Heart left ventricle (tissue), 16 donors: ENCODE measurements at regions of chrX and their contacts with region 1.

Region 1: DNA sequence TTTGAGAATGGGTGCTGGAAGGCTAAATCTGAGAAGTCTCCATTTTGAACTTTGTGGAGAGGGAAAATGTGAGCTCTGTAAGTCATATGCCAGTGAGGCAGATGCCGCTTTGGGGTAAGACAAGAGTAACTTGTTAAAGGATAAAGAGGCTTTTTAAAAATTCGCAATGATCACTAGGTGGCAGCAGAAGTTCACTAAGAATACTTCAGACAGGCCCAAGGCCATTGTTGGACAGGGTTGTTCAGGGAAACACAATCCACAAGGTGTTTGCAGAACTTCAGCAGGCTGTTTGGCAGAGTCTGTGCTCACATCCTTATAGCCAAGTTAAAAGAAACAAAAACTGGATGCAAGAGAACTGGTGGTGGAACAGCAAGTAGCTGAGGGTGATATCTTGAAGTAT is 13.7 kb upstream of the PIGA start:
- DNase-seq: peak in 4 of 5 donors; percentile 18 to 34 (median 27)
- ATAC-seq: peak; percentile 76 to 88 (median 82)
- H3K4me3 ChIP-seq: no peak overlapping the region
- H3K27ac ChIP-seq: no peak overlapping the region
- H3K4me1 ChIP-seq: no peaks in the 10 kb centered on the region
- H3K27me3 ChIP-seq: peaks cover 0 to 10% (median 0%) of the 10 kb centered on the region in 9 donors
- CTCF ChIP-seq: peak; percentile 33 to 61 (median 49)
- POLR2A ChIP-seq: no peak

Region 2: DNA sequence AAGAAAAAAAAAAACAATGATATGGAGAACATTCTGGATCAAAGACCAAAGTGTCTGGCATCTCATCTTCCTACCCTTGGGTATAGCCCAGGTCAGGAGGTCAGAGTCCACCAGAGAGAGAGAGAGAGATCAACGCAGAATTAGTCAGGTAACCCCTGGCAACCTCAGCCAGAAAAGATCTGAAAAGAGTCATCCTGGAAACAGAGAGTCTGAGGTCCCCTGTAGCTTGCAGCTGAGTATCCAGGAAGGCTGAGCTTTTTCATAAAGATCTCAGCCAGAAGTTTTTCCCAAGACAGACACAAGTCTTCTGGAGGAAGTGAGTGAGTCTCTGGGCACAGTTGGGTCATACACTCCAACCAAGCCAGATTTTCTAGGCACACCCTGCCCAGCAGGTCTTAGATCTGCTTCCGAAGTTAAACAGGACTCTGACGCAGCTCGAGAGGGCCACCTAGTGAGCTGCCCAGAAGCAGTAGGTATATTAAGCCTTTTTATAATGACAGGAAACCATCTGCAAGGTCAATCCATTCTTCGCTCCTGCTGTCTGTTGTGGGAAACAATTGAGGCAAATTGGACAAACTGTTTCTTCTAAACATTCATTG is 216.0 kb after region 1 on chrX:
- intact Hi-C with region 1: loop called in 6 of 10 experiments (anchors 5 to 10 kb)
- DNase-seq: peak; percentile 33 to 54 (median 52)
- ATAC-seq: peak; percentile 58 to 95 (median 92)
- H3K4me3 ChIP-seq: no peak overlapping the region
- H3K27ac ChIP-seq: no peak overlapping the region
- H3K4me1 ChIP-seq: peaks cover 0 to 10% (median 0%) of the 10 kb centered on the region in 12 donors
- H3K27me3 ChIP-seq: peaks cover 0 to 64% (median 0%) of the 10 kb centered on the region in 9 donors
- CTCF ChIP-seq: peak; percentile 29 to 67 (median 57)
- POLR2A ChIP-seq: no peak

Region 3: DNA sequence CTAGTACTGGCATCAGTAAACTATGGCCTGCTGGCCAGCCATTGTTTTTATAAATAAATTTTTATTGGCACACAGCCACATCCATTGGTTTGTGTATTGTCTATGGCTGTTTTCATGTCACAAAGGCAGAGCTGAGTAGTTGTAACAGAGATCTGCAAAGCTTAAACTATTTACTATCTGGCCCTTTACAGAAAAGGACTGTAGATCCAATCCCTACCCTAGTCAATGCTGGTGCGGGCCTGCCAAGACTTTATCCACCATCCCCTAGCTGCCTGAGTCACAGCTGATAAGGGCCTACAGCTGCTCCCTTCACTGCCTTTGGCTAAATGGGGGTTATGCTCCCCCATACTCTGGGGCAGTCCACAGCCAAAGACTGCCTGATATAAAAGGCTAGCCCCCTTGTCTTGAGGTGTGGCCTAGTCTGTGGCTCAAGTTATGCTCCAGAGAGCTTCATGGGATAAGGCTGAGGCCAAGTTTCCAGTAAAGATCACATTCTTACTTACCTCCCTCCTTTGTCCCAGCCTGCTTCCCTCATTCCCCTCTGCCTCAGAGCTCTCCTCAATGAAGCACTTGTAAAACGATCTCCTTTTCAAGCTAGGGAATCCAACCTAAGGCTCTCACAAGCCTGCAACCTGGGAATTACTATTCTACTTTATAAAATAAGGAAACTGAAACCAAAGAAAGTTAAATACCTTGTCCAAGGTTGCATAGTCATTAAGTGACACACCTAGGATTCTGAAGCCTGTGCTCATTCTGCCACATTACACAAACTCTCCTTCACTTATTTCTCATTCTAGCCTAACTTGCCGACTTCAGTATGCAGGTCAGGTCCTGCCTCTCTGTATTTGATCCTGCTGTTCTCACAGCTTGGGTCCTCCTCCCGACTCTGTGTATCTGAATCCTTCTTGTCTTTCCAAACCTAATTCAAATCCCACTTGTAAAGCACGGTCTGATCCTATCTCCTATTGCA is 231.0 kb after region 1 on chrX:
- intact Hi-C with region 1: loop called in 1 of 10 experiments (anchors 10 kb)
- DNase-seq: peak; percentile 25 to 57 (median 40)
- ATAC-seq: peak; percentile 80 to 96 (median 91)
- H3K4me3 ChIP-seq: no peak overlapping the region
- H3K27ac ChIP-seq: peak overlapping the region in 8 of 12 donors; percentile 17 to 76 (median 58)
- H3K4me1 ChIP-seq: peaks cover 0 to 18% (median 0%) of the 10 kb centered on the region in 12 donors
- H3K27me3 ChIP-seq: peaks cover 0 to 49% (median 0%) of the 10 kb centered on the region in 9 donors
- CTCF ChIP-seq: no peak
- POLR2A ChIP-seq: no peak